ENCODE measurements at regions of chr18 and their contacts with region 1.

Region 1: GRCh38 chr18:10270151-10270571 is 184.3 kb upstream of the APCDD1 start:
- DNase-seq: no peak
- H3K4me3 ChIP-seq: no peak overlapping the region
- H3K27ac ChIP-seq: no peak overlapping the region
- H3K4me1 ChIP-seq: no peaks in the 10 kb centered on the region
- CTCF ChIP-seq: no peak

Region 2: DNA sequence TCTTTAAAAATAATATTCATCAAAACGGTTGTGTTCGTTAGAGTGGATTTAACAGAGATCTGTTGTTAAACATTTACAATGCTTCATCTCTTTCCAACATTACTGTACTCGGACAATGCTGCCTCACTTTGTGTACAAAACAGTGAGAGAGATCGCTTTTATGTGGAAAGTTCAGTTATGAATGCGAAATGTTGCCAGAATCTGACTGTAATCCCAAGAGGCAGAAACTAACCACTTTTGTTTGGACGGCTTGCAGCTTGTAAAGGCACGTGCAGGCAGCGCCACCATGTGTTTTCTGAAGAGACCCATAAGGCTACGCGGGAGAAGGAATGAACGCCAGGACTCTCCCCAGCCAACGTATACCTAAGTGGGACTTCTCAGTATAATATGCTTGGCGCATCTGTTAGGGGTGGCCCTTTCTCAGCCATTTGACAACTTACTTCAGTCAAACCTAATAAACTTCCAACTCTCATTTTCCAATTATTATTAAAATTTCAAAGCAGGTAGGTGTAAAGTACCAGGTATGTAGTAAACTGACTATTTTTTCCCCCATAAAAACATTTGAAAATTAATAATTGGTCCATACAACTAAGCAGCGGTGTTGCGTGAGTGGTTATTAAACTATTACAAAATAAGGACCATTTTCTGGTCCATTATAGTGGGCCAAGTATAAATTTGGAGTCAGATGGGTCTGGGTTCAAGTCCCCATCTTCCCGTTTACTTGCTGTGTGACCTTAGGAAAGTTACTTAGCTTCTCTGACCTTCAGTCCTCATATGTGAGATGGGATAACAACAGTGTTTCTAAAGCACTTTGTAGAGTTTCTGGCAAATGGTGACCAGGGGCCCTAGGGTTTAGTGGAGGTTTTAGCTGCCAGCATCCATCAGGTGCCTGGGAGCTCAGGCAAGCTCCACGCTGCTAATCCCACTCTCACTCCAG is 250.1 kb after region 1 on chr18:
- CTCF ChIA-PET with region 1: no interaction called
- POLR2A ChIA-PET with region 1: no interaction called
- intact Hi-C with region 1: loop called (anchors 10 kb)
- DNase-seq: peak; percentile 86
- H3K4me3 ChIP-seq: no peak overlapping the region
- H3K27ac ChIP-seq: no peak overlapping the region
- H3K4me1 ChIP-seq: peaks cover 10% of the 10 kb centered on the region
- CTCF ChIP-seq: peak; percentile 95

Measured in OCI-LY7 (cell line).